ENCODE measurements at regions of chr6 and their contacts with region 1.

Region 1: GRCh38 chr6:40845553-40845952 is 193.5 kb downstream of the UNC5CL start:
- DNase-seq: peak in 3 of 4 experiments; percentile 28 to 66 (median 48)
- ATAC-seq: peak; percentile 88
- H3K4me3 ChIP-seq: no peak overlapping the region
- H3K27ac ChIP-seq: no peak overlapping the region
- H3K4me1 ChIP-seq: no peaks in the 10 kb centered on the region
- H3K27me3 ChIP-seq: 0 out of 5 replicates have a peak, but pooled peaks cover 0 to 4% of the 10 kb centered on the region in 2 experiments
- CTCF ChIP-seq: peak; percentile 65 to 79 (median 78)
- EP300 ChIP-seq: no peak
- POLR2A ChIP-seq: no peak
- RAD21 ChIP-seq: peak; percentile 62 to 74

Region 2: GRCh38 chr6:39980839-39981580 is 864.5 kb before region 1 on chr6:
- CTCF ChIA-PET with region 1: no interaction called
- POLR2A ChIA-PET with region 1: no interaction called
- in situ Hi-C with region 1: no loop called
- intact Hi-C with region 1: loop called (anchors 10 kb)
- DNase-seq: peak; percentile 62 to 78 (median 66)
- ATAC-seq: peak; percentile 94
- H3K4me3 ChIP-seq: no peak overlapping the region
- H3K27ac ChIP-seq: no peak overlapping the region
- H3K4me1 ChIP-seq: peaks cover 0 to 9% of the 10 kb centered on the region in 2 experiments; a peak in 2 of 5 replicates
- H3K27me3 ChIP-seq: no peaks in the 10 kb centered on the region; a peak in 1 of 5 replicates
- CTCF ChIP-seq: peak; percentile 62 to 93 (median 67)
- EP300 ChIP-seq: no peak
- POLR2A ChIP-seq: no peak
- RAD21 ChIP-seq: peak; percentile 83 to 85

Region 3: GRCh38 chr6:40545954-40546353 is 299.6 kb before region 1 on chr6:
- CTCF ChIA-PET with region 1: no interaction called
- POLR2A ChIA-PET with region 1: no interaction called
- in situ Hi-C with region 1: no loop called
- intact Hi-C with region 1: loop called (anchors 10 kb)
- DNase-seq: no peak
- ATAC-seq: no peak
- H3K4me3 ChIP-seq: no peak overlapping the region
- H3K27ac ChIP-seq: no peak overlapping the region
- H3K4me1 ChIP-seq: no peaks in the 10 kb centered on the region
- H3K27me3 ChIP-seq: peaks cover 3 to 40% of the 10 kb centered on the region in 2 experiments; a peak in 4 of 5 replicates
- CTCF ChIP-seq: no peak
- EP300 ChIP-seq: no peak
- POLR2A ChIP-seq: no peak
- RAD21 ChIP-seq: no peak